Heart left ventricle (tissue), 16 donors: ENCODE measurements at regions of chr11 and their contacts with region 1.

Region 1: GRCh38 chr11:101043940-101044339 is 85.7 kb downstream of the PGR start:
- DNase-seq: no peak
- ATAC-seq: no peak
- H3K4me3 ChIP-seq: no peak overlapping the region
- H3K27ac ChIP-seq: no peak overlapping the region
- H3K4me1 ChIP-seq: peaks cover 0 to 4% (median 0%) of the 10 kb centered on the region in 12 donors
- H3K27me3 ChIP-seq: no peaks in the 10 kb centered on the region
- CTCF ChIP-seq: no peak
- POLR2A ChIP-seq: no peak

Region 2: GRCh38 chr11:100849009-100849900 is 194.7 kb before region 1 on chr11:
- intact Hi-C with region 1: no loop called
- DNase-seq: no peak
- ATAC-seq: peak in 3 of 4 donors; percentile 47 to 86 (median 62)
- H3K4me3 ChIP-seq: peak overlapping the region in 2 of 12 donors; percentile 7 to 8
- H3K27ac ChIP-seq: peak overlapping the region in 9 of 12 donors; percentile 13 to 61 (median 36)
- H3K4me1 ChIP-seq: peaks cover 0 to 28% (median 17%) of the 10 kb centered on the region in 12 donors
- H3K27me3 ChIP-seq: no peaks in the 10 kb centered on the region
- CTCF ChIP-seq: no peak
- POLR2A ChIP-seq: no peak

Region 3: GRCh38 chr11:100970283-100971164 is 73.4 kb before region 1 on chr11:
- intact Hi-C with region 1: loop called in 1 of 10 experiments (anchors 5 kb)
- DNase-seq: peak in 2 of 5 donors; percentile 7 to 20
- ATAC-seq: peak; percentile 73 to 84 (median 77)
- H3K4me3 ChIP-seq: no peak overlapping the region
- H3K27ac ChIP-seq: peak overlapping the region in 8 of 12 donors; percentile 6 to 60 (median 47)
- H3K4me1 ChIP-seq: peaks cover 0 to 16% (median 4%) of the 10 kb centered on the region in 12 donors
- H3K27me3 ChIP-seq: no peaks in the 10 kb centered on the region
- CTCF ChIP-seq: no peak
- POLR2A ChIP-seq: no peak

Region 4: DNA sequence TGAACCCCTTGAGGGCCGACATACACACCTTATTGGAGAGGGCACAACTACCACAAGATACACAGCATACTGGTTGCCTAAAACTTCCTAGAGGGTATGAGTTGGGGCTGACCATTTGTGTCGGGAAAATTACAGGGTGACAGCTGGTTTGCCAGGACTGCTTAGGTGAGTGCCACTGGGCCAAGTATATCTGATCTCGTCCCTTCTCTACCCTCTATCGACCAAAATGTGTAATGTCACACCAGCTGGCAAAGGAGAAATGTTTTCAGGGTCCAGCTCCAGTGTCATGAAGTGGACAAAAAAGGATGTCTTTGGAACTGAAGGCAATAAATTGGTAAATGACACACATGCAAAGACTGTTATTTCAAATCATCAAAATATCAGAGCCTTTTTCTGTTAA is 40.5 kb before region 1 on chr11:
- intact Hi-C with region 1: no loop called
- DNase-seq: no peak
- ATAC-seq: no peak
- H3K4me3 ChIP-seq: no peak overlapping the region
- H3K27ac ChIP-seq: no peak overlapping the region
- H3K4me1 ChIP-seq: no peaks in the 10 kb centered on the region
- H3K27me3 ChIP-seq: no peaks in the 10 kb centered on the region
- CTCF ChIP-seq: no peak
- POLR2A ChIP-seq: no peak

Region 5: DNA sequence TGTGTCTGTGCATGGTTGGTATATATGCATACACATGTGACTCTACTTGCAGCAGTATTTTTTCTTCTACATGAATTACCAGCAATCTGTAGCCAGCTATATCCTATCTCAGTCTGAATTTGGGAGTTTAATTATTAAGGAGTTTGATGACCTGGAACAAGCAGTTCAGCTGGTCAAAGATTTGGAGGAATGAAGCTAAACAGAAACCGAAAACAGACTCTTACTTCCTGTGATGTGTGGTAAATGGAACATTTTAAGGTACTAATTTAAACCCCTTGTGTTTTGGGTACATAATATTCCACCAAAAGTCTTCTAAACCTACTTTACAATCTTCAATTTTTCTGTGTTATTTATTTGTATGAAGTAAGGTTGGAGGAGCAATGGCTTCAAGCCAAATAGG is 210.1 kb after region 1 on chr11:
- intact Hi-C with region 1: no loop called
- DNase-seq: no peak
- ATAC-seq: no peak
- H3K4me3 ChIP-seq: no peak overlapping the region
- H3K27ac ChIP-seq: no peak overlapping the region
- H3K4me1 ChIP-seq: no peaks in the 10 kb centered on the region
- H3K27me3 ChIP-seq: no peaks in the 10 kb centered on the region
- CTCF ChIP-seq: no peak
- POLR2A ChIP-seq: no peak